Mucosa of descending colon (tissue), 3 donors: ENCODE measurements at regions of chr2 and their contacts with region 1.

Region 1: DNA sequence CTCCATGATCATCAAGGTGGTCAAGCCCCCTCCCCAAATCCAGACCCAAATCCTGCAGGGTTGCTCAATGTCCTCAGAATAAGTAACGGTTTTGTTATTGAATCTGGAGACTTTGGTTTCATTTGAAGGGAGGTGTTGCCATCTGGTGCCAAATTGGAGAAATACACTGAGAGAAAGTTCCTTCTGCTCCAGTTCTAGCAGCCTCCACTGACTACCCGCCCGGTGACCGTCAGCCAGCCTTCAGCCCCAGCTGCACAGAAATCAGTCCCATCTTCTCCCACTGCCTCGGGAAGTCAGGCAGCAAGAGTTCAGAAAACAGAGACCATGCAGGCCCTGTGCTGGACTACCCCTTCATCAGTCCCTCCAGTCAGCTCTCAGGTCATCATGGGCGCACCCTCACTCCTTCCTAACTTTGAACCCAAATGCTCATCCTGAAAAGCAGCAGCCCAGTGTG is 38.7 kb downstream of the PKDCC start:
- DNase-seq: peak in 2 of 3 donors; percentile 60 to 76
- ATAC-seq: peak; percentile 79
- H3K4me3 ChIP-seq: no peak overlapping the region
- H3K4me1 ChIP-seq: peaks cover 25% of the 10 kb centered on the region
- CTCF ChIP-seq: peak; percentile 41

Region 2: DNA sequence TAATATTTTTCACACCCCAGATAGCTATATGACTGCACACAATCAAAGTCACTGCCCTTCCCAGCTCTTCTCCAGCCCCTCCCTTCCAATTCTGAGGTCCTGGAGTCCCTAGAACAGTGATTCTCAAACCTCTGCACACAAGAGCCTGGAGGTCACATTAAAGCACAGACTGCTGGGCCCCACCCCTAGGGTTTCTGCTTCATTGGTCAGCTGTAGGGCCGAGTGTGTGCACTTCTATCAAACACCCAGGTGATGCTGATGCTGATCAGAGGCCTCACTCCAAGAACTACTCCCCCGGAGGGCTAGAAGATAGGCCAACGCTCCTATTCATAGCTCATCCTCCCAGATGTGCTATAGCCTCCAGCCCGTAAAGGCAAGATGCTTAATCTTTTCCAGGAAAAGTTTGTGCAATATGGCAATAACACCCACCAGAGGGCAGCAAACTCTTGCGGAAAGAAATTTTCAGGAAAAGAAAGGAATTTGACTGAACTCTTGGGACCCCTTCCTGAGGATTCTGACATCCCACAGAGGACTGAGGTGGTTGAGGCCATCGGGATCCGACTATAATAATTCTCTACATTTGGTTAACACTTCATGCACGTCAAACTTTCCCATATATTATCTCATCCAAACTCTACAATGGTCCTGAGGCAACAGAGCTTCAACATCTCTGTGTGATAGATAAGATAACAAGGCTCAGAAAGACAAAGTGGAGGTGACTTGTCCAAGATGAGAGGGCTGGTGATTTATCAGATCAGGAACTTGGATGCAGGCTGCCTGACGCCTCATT is 232.9 kb before region 1 on chr2:
- intact Hi-C with region 1: loop called (anchors 5 kb)
- DNase-seq: peak in 1 of 3 donors; percentile 79
- ATAC-seq: peak; percentile 53
- H3K4me3 ChIP-seq: no peak overlapping the region
- H3K4me1 ChIP-seq: no peaks in the 10 kb centered on the region
- CTCF ChIP-seq: peak; percentile 42

Region 3: DNA sequence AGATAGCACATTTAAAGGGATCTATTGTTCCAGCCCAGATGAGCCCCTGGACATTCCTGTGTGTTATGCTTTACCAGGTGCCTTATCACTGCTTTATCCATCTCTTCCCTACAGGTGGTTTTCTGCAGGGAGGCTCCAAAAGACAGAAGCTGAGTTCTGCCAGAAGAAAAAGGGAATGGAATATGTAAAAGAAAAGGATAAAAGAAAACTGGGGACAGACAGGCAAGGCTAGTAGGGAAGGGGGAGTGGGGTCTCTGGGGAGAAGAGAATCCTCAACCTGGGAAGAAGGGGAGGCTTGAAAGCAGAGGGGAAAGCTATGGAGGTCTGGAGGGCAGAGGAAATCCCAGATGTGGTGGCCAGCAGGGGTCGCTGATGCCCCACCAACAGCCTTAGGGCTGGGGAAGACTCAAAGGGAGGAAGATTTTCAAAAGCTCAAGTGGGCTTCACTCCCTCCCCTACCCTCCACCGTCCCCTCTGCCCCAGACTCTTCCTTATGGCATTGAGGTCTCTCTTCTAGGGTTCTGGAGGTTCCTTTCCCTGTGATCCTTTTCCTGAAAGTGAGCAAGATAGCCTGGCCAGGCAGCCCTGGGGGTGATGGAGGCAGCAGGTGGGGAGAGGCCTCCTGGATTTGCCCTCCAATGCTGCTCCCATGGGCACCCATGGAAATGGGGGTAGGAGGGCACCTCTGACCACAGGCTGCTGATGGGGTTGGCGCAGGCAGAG is 216.8 kb before region 1 on chr2:
- intact Hi-C with region 1: loop called (anchors 5 kb)
- DNase-seq: peak; percentile 74 to 89 (median 86)
- ATAC-seq: peak; percentile 87
- H3K4me3 ChIP-seq: no peak overlapping the region
- H3K4me1 ChIP-seq: no peaks in the 10 kb centered on the region
- CTCF ChIP-seq: peak; percentile 55

Region 4: DNA sequence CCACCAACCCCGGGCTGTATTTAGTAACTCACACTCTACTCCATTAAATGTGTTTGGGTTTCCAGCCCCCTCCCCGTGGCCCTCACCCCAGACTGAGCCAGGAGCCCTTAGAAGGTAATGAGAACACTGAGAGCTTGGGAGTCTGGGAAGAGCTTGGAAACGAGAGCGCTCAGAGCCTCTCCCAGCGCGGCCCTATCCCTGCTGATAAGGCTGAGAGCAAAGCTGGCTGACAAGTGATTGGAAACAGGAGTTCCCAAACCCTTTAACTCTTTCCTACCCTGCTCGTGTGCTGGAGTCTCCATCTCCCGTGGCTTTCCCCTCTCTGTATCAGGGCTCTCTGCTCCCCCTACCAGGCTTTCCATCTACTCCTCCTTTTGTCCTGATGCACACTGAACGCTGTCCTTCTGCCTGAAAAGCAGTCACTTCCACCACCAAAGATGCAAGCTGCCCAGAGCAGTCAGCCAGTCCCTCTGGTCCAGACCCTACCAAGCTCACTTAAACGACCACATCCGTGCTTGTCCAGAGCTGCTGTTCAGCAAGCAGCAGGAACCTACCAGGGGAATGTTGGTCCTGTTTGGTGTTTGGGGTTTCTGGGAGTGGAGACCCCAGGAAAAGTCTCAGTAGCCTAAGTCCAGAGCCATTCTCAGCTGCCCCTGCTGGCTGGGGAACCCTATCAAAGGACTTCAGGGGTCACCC is 138.7 kb before region 1 on chr2:
- intact Hi-C with region 1: no loop called
- DNase-seq: no peak
- ATAC-seq: peak; percentile 21
- H3K4me3 ChIP-seq: no peak overlapping the region
- H3K4me1 ChIP-seq: no peaks in the 10 kb centered on the region
- CTCF ChIP-seq: no peak